ENCODE measurements at regions of chr17 and their contacts with region 1.

Region 1: DNA sequence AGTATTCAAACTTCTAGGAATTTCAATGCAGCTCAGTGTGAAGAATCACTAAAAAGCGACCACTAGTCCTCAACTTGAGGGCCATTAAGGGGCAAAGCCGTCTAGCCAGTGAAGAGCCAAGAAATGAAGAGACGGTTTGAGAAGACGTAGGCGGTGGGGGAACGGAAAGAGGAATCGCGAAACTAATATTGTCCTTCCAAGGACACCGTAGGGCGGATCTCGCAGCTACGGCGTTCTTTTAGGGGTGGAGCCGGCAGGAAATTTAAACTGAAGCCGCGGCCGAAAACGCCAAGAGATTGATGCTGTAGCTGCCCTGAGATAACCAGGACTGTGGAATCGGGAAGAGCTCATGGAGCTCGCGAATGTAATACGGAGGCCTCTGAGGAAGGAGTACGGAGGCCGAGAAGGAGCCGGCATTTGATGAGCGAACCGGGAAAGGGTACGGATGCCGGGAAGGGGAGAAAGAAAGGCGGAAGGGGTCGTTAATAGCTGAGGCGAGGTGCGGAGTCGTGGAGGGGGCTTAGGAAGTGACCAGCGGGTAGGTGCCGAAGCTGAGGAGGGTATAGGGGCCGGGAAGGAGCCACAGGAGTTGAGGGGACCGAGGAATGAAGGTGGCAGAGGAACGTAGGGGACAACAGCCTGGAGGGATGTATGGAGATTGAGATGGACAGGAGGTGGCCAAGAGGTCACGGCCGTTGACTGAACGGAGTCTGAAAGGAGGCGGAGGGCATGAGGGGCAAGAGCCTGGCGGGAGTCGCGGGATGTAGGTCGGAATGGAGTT is at the start of gene DBF4B:
- DNase-seq: peak; percentile 79
- ATAC-seq: peak; percentile 79
- H3K4me3 Mint-ChIP-seq: no peak within 1 kb of the TSS
- H3K27ac Mint-ChIP-seq: no peak within 1 kb of the TSS
- H3K4me1 Mint-ChIP-seq: peaks cover 6% of the 10 kb centered on the region
- H3K27me3 Mint-ChIP-seq: peaks cover 4% of the 10 kb centered on the region; the same call in 1 of the 2 replicates
- CTCF ChIP-seq: no peak
- total RNA-seq, gene DBF4B: 32.2 to 35.5 TPM (median 32.9 TPM) in 3 replicates

Region 2: DNA sequence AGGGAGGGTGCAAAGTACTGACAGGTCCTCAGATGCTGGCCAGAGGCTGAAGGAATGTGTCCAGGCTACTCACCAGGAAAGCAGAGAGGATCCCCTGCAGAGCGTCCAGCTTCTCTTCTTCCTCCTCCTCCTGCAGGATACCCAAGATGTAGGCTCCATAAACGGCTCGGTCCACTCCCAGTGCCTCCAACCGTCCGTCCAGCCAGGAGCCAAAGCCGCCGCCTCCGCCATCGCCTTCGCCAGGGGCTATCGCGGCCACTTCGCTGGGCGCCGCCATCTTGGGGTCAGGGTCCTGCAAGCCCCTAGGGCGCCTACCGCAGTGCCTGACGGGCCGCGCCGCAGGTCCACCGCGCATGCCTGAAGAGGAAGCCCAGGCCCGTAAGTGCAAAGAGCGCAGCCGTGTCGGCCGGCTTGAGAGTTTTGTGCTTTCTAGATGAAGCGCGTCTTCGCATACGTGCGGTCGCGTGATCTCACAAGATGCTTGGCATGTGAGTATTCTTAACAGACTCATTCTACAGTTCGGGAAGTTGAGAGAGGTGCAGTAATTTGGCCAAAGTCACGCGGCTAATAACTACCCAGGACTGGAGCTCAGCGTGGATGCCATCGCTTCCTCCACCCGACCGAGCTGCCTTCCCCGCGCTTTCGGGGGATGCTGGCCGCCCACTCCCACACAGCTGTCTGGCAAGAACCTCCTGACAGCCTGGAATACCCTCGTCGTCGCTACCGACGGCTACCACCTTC is 18.9 kb before region 1 on chr17 and contains the start of gene CCDC43:
- CTCF ChIA-PET with region 1: interaction called, 14 read pairs
- POLR2A ChIA-PET with region 1: no interaction called
- DNase-seq: peak; percentile 93
- ATAC-seq: peak; percentile 98
- H3K4me3 Mint-ChIP-seq: peak within 1 kb of the TSS; percentile 96
- H3K27ac Mint-ChIP-seq: peak within 1 kb of the TSS; percentile 96
- H3K4me1 Mint-ChIP-seq: peaks cover 16% of the 10 kb centered on the region
- H3K27me3 Mint-ChIP-seq: no peaks in the 10 kb centered on the region
- CTCF ChIP-seq: no peak
- total RNA-seq, gene CCDC43: 32.4 to 37.9 TPM (median 32.6 TPM) in 3 replicates

Region 3: GRCh38 chr17:44733753-44734152 is 25.2 kb after region 1 on chr17:
- CTCF ChIA-PET with region 1: no interaction called
- POLR2A ChIA-PET with region 1: no interaction called
- DNase-seq: peak; percentile 72
- ATAC-seq: peak; percentile 95
- H3K4me3 Mint-ChIP-seq: no peak overlapping the region
- H3K27ac Mint-ChIP-seq: peak overlapping the region; percentile 27; the same call in 1 of the 2 replicates
- H3K4me1 Mint-ChIP-seq: peaks cover 11% of the 10 kb centered on the region
- H3K27me3 Mint-ChIP-seq: no peaks in the 10 kb centered on the region
- CTCF ChIP-seq: 0 out of 2 replicates have a peak, but pooled peaks have one; percentile 15